CD4-positive, alpha-beta T cell (primary cell): ENCODE measurements at regions of chrX and their contacts with region 1.

Region 1: GRCh38 chrX:51802917-51803688 is 59.9 kb downstream of the GSPT2 start:
- DNase-seq: peak; percentile 9 to 79 (median 42)
- ATAC-seq: peak; percentile 86
- H3K4me3 ChIP-seq: peak overlapping the region; percentile 80
- H3K4me3 Mint-ChIP-seq: peak overlapping the region; percentile 93
- H3K27ac ChIP-seq: peak overlapping the region; percentile 41 to 85
- H3K27ac Mint-ChIP-seq: peak overlapping the region; percentile 94
- H3K4me1 ChIP-seq: peaks cover 2% of the 10 kb centered on the region
- H3K4me1 Mint-ChIP-seq: peaks cover 30% of the 10 kb centered on the region
- H3K27me3 ChIP-seq: no peaks in the 10 kb centered on the region
- H3K27me3 Mint-ChIP-seq: no peaks in the 10 kb centered on the region
- CTCF ChIP-seq: peak; percentile 41

Region 2: DNA sequence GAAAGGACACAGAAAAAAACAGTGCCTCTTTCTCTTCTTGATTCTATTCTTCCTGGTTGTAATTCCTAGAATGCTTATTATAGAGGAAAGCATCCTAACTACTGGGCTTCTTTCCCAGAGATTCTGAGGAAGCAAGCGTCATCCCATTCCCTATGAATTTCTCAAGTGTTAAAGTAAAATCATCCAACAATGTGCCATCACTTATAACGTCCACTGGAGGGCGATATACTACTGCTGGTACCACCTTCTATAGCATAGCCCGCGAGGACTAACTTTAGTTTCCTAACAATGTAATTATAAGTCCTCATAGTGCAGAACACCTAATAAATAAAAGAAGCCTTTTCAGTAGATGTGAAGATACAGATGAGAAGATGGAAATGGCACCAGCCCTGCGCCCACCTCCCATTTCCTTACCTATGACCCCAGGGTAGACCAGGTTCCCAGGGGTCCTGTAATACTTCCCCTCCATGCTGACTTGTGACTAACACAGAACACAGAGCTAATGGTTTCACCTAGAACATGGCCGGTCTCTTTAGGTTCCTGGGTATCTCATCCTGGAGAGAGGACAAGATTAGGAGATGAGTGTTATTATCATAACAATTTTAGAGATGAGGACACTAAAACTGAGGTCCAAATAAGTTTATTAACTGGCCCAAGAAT is 188.6 kb before region 1 on chrX:
- CTCF ChIA-PET with region 1: no interaction called
- POLR2A ChIA-PET with region 1: no interaction called
- intact Hi-C with region 1: no loop called
- DNase-seq: peak in 4 of 14 experiments; percentile 4 to 46 (median 30)
- ATAC-seq: no peak
- H3K4me3 ChIP-seq: no peak overlapping the region
- H3K4me3 Mint-ChIP-seq: no peak overlapping the region
- H3K27ac ChIP-seq: no peak overlapping the region
- H3K27ac Mint-ChIP-seq: no peak overlapping the region
- H3K4me1 ChIP-seq: no peaks in the 10 kb centered on the region
- H3K4me1 Mint-ChIP-seq: no peaks in the 10 kb centered on the region
- H3K27me3 ChIP-seq: peaks cover 0 to 13% of the 10 kb centered on the region in 2 experiments
- H3K27me3 Mint-ChIP-seq: peaks cover 51% of the 10 kb centered on the region
- CTCF ChIP-seq: no peak

Region 3: DNA sequence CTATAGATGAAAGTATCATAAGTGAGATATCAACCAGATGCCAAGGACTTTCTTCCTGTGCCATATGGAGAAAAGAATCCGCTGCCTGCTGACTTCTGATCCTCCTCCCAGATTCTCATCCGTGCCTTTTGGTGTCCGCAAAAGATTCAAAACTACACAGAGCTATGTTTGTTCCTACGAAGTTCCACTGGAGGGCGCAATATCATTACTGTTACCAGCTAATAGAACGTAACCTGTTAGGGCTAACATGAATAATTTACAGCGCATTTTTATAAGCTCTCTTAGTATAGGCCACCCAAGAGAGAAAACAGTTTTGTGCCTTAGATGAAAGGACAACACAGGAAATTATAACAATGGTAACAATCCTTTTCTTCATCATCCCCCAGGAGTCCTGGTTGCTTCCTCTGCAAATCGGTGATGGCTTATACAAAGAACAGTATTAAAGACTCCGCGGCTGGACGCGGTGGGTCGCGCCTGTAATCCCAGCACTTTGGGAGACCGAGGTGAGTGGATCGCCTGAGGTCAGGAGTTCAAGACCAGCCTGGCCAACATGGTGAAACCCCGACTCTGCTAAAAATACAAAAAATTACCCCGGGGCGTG is 161.6 kb before region 1 on chrX:
- CTCF ChIA-PET with region 1: no interaction called
- POLR2A ChIA-PET with region 1: no interaction called
- intact Hi-C with region 1: loop called in 1 of 2 experiments (anchors 5 kb)
- DNase-seq: peak in 4 of 14 experiments; percentile 6 to 44 (median 24)
- ATAC-seq: no peak
- H3K4me3 ChIP-seq: no peak overlapping the region
- H3K4me3 Mint-ChIP-seq: no peak overlapping the region
- H3K27ac ChIP-seq: no peak overlapping the region
- H3K27ac Mint-ChIP-seq: no peak overlapping the region
- H3K4me1 ChIP-seq: no peaks in the 10 kb centered on the region
- H3K4me1 Mint-ChIP-seq: no peaks in the 10 kb centered on the region
- H3K27me3 ChIP-seq: peaks cover 3 to 16% of the 10 kb centered on the region in 2 experiments
- H3K27me3 Mint-ChIP-seq: peaks cover 42% of the 10 kb centered on the region
- CTCF ChIP-seq: peak; percentile 34

Region 4: DNA sequence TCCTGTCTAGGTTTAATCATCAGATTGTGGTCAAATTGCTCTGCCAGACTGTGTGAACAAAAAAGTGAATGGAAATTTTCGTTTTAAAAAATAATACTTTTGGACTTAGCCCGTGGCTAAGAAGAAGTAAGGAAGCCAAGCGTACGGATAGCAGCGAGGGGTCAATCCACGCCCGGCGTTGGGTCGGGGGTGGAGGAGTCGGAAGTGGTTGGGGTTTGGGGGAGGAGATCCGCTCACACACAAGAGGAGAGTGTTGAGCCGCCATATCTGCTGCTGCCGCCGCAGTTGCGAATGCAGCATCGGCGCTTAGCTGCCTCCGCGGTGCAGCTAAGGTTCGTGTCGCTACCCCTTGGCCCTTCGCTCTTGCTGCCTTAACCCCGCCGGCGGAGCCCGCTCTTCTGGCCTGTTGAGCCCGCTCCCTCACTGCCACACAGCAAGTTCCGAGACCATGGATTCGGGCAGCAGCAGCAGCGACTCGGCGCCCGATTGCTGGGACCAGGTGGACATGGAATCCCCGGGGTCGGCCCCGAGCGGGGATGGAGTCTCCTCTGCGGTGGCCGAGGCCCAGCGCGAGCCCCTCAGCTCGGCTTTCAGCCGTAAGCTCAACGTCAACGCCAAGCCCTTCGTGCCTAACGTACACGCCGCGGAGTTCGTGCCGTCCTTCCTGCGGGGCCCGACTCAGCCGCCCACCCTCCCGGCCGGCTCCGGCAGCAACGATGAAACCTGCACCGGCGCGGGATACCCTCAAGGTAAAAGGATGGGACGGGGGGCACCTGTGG is 59.7 kb before region 1 on chrX and contains the start of gene GSPT2:
- CTCF ChIA-PET with region 1: no interaction called
- POLR2A ChIA-PET with region 1: interaction called, 12 read pairs
- intact Hi-C with region 1: no loop called
- DNase-seq: peak; percentile 16 to 75 (median 38)
- ATAC-seq: peak; percentile 88
- H3K4me3 ChIP-seq: peak within 1 kb of the TSS; percentile 83
- H3K4me3 Mint-ChIP-seq: peak within 1 kb of the TSS; percentile 92
- H3K27ac ChIP-seq: peak within 1 kb of the TSS in 1 of 2 donors; percentile 60
- H3K27ac Mint-ChIP-seq: peak within 1 kb of the TSS; percentile 89
- H3K4me1 ChIP-seq: peaks cover 11% of the 10 kb centered on the region
- H3K4me1 Mint-ChIP-seq: peaks cover 16% of the 10 kb centered on the region
- H3K27me3 ChIP-seq: peaks cover 0 to 6% of the 10 kb centered on the region in 2 experiments
- H3K27me3 Mint-ChIP-seq: peaks cover 3% of the 10 kb centered on the region
- CTCF ChIP-seq: no peak
- total RNA-seq, gene GSPT2: 6.8 to 7.8 TPM

Region 5: GRCh38 chrX:51860679-51861078 is 57.6 kb after region 1 on chrX:
- CTCF ChIA-PET with region 1: no interaction called
- POLR2A ChIA-PET with region 1: no interaction called
- intact Hi-C with region 1: no loop called
- DNase-seq: peak in 2 of 14 experiments; percentile 11 to 14
- ATAC-seq: no peak
- H3K4me3 ChIP-seq: no peak overlapping the region
- H3K4me3 Mint-ChIP-seq: no peak overlapping the region
- H3K27ac ChIP-seq: no peak overlapping the region
- H3K27ac Mint-ChIP-seq: no peak overlapping the region
- H3K4me1 ChIP-seq: no peaks in the 10 kb centered on the region
- H3K4me1 Mint-ChIP-seq: peaks cover 23% of the 10 kb centered on the region
- H3K27me3 ChIP-seq: no peaks in the 10 kb centered on the region
- H3K27me3 Mint-ChIP-seq: no peaks in the 10 kb centered on the region
- CTCF ChIP-seq: no peak

Region 6: DNA sequence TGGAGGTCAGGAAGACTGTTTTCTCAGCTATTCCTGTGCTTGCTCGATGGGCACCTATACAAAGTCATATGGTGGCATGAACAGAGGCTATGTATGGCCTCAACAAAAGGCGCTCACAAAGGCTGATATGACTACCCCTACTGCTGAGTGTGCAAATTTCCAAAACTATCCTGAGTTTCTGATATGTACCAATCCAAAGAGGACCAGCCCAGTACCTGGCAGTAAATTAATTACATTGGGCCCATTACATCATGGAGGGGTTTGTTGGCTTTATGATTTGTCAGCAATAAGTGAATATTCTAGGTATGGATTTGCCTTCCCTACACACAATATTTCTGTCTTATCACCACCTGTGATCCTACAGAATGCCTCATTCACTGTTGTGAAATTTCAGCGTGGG is 102.6 kb after region 1 on chrX:
- CTCF ChIA-PET with region 1: no interaction called
- POLR2A ChIA-PET with region 1: no interaction called
- intact Hi-C with region 1: no loop called
- DNase-seq: no peak
- ATAC-seq: no peak
- H3K4me3 ChIP-seq: no peak overlapping the region
- H3K4me3 Mint-ChIP-seq: no peak overlapping the region
- H3K27ac ChIP-seq: no peak overlapping the region
- H3K27ac Mint-ChIP-seq: no peak overlapping the region
- H3K4me1 ChIP-seq: no peaks in the 10 kb centered on the region
- H3K4me1 Mint-ChIP-seq: peaks cover 9% of the 10 kb centered on the region
- H3K27me3 ChIP-seq: no peaks in the 10 kb centered on the region
- H3K27me3 Mint-ChIP-seq: no peaks in the 10 kb centered on the region
- CTCF ChIP-seq: no peak